HEK293T (cell line): ENCODE measurements at regions of chr3 and their contacts with region 1.

Region 1: GRCh38 chr3:120348981-120349818 is at the start of gene LRRC58:
- DNase-seq: peak; percentile 89

Region 2: DNA sequence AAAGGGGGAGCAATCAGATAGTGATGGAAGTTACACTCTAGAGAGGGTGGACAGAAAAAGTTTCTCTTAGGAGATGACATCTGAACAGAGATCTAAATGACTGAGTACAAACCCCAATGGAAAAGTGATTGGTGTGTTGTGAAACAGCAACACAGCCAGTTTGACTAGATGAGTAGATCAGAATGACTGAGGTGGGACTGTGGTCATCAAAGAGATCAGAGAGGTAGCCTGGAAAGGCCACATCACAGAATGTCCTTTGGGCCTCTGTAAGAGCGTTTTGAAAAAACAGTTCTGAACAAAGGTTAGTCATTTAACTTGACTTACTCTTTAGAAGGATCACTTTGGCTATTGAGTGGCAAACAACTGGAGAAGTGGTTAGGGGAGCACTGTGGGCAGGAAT is 10.7 kb before region 1 on chr3:
- CTCF ChIA-PET with region 1: interaction called, 3 read pairs
- POLR2A ChIA-PET with region 1: interaction called, 16 read pairs
- DNase-seq: no peak